GM10248 (cell line): ENCODE measurements at regions of chr7 and their contacts with region 1.

Region 1: DNA sequence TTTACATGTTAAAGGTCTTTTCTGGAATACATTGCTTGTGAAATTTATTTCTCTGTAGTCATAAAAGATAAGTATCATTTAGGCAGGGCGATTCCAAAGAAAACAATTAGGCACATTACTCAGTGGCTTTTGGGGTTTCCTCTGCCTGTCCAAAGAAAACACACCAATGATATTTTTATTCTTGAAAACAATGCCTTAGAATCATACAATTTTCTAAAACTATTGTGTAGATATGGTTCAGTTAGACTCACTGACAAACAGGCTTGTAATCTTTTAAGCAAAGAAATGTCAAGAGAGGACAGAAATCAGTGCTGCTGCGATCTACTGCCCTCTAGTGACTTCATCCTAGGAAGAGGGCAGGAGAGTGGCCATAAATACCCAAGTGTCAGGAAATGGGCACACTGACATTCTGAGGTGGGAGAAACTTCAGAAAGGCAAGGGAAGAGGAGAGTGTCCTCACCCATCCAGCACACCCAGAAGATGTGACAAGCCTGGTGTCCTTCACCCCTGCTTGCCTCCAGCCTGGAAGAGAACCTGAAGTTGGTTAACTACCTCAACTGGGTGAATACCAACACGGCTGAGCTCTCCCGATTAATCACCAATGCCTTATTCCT is 120.5 kb downstream of the GALNT11 start:
- DNase-seq: no peak
- CTCF ChIP-seq: peak; percentile 57

Region 2: DNA sequence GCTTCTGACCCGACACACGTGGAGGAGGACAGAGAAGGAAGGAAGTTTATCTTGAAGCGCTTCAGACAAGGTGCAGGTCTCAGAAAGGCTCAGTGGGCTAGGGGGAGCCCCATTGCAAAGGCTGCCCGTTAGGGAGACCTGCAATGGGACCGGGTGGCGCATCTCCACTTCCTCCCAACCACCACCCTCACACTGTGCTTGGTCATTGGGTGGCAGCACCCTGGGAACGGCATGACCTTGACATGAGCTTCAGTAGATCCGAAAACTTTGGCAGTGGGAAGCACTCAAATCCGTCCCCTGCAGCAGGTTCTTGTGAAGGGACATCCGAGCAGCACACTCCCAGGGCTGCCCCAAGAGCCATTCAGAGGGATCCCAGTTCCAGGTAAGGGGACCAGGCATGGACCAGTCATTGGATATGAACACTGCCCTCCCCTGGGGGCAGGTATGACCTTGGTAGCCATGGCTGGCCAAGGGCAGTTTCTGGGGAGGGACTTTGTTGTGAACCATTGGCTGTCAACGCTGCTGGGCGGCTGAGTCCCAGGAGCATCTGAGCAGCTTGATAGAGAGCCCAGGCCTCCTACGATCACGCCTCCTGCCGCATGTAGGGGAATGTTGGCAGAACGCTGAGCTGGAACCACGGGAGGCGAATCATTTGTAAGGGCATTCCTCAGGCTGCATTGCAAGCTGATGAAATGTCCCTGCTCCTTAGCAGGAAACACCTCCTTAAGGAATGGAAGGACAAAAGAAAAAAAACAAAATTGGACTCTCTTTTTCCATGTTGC is 158.0 kb before region 1 on chr7:
- CTCF ChIA-PET with region 1: no interaction called
- POLR2A ChIA-PET with region 1: no interaction called
- DNase-seq: no peak
- CTCF ChIP-seq: no peak

Region 3: GRCh38 chr7:152158801-152159587 is 13.0 kb after region 1 on chr7:
- CTCF ChIA-PET with region 1: interaction called, 19 read pairs
- POLR2A ChIA-PET with region 1: no interaction called
- DNase-seq: peak; percentile 70
- CTCF ChIP-seq: no peak